CD14-positive monocyte (primary cell): ENCODE measurements at regions of chrX and their contacts with region 1.

Region 1: DNA sequence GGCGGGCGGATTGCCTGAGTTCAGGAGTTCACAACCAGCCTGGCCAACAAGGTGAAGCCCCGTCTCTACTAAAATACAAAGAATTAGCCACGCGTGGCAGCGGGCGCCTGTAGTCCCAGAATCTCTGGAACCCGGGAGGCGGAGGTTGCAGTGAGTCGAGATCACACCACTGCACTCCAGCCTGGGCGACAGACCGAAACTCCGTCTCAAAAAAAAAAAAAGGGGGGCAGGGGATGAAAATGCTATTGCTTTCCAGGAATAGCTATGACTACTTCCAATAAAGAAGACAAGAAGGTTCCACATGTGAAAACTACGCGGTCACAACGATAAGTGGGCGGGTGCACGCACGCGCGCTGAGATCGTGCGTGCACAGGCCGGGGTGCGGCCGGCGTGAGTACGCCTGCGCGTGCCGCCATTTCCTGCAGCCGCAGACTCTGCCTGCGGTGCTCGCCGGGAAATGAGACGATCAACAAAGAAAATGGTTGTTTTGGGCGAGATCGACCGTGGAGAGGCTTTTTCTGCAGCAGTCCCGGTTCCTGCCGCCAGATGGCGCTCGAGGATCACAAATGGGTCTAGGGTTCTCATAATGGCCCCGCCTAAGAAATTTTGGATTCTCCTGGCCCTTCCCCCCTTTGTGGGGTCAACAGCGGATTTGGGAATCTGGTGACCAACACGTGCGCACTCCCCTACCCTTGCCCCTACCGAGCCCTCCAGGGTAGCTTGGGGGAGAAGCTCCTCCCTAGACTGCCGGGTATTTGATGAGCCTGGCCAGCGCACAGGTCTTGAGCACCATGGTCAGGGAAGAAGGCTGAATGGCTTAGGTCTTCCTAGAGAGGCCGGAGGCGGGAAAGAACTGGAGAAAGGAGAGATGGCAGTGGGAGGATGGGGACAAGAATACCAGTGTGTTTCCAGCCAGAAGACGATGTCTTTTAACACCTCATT is 35.1 kb downstream of the PNMA5 start:
- DNase-seq: peak; percentile 84 to 90 (median 89)
- H3K4me3 ChIP-seq: peak overlapping the region in 2 of 3 experiments; percentile 20 to 58
- H3K4me3 Mint-ChIP-seq: peak overlapping the region; percentile 57 to 63
- H3K27ac ChIP-seq: peak overlapping the region; percentile 53 to 57
- H3K27ac Mint-ChIP-seq: peak overlapping the region; percentile 60 to 88 (median 79)
- H3K4me1 ChIP-seq: peaks cover 8% of the 10 kb centered on the region in 2 donors
- H3K4me1 Mint-ChIP-seq: peaks cover 12% of the 10 kb centered on the region
- H3K27me3 ChIP-seq: no peaks in the 10 kb centered on the region
- H3K27me3 Mint-ChIP-seq: peaks cover 0 to 13% (median 0%) of the 10 kb centered on the region in 3 donors
- CTCF ChIP-seq: peak; percentile 71

Region 2: DNA sequence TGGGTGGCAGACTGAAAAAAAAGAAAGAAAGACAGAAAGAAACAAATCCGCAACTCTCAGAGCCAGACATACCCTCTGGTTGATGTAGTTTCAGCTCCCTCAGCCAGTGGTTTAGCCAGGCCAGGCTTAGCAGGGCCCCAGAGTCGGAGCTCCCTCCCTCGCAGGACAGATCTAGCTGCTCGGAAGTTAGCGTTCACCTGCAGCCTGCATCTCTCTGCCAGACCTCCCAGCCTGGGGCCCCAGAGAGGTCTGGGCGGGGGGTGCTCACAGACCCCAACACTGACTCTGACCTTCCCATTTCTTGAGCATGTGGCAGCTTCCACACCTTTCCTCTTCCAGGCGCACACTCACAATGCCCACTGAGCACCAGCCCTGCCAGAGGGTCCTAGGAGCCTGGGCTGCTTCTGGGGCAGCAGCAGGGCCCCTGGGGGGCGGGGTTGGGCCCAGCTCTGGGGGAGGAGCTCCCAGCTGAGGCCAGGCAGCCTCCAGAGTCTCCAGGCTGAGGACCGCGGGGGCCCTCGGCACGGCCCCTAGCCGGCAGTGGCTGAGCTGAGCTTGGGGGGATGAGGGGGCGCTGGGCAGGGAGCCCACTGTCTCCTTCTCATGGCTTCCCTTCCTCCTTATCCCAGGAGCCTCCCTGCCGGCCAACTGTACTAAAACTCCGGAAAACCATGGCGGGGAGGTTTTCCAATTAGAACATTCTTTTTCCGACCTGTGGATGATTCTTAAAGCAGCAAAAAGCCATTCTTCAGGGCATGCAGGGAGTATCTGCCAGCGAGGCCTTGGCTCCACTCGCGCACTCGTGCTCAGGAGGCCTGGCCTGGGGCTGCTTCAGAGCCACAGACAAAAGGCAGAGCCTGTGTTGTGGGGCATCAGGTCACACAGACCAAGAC is 65.5 kb before region 1 on chrX:
- intact Hi-C with region 1: no loop called
- DNase-seq: no peak
- H3K4me3 ChIP-seq: no peak overlapping the region
- H3K4me3 Mint-ChIP-seq: no peak overlapping the region
- H3K27ac ChIP-seq: no peak overlapping the region
- H3K27ac Mint-ChIP-seq: no peak overlapping the region
- H3K4me1 ChIP-seq: peaks cover 0 to 6% of the 10 kb centered on the region in 2 donors
- H3K4me1 Mint-ChIP-seq: peaks cover 8% of the 10 kb centered on the region
- H3K27me3 ChIP-seq: peaks cover 3 to 17% of the 10 kb centered on the region in 2 donors
- H3K27me3 Mint-ChIP-seq: peaks cover 18 to 54% (median 44%) of the 10 kb centered on the region in 3 donors
- CTCF ChIP-seq: no peak

Region 3: GRCh38 chrX:153032397-153033118 is 73.8 kb after region 1 on chrX:
- intact Hi-C with region 1: loop called in 1 of 2 experiments (anchors 10 kb)
- DNase-seq: peak; percentile 68 to 71 (median 68)
- H3K4me3 ChIP-seq: peak overlapping the region; percentile 24 to 67 (median 48)
- H3K4me3 Mint-ChIP-seq: peak overlapping the region; percentile 81 to 88
- H3K27ac ChIP-seq: peak overlapping the region; percentile 50 to 84
- H3K27ac Mint-ChIP-seq: peak overlapping the region; percentile 87 to 97 (median 95)
- H3K4me1 ChIP-seq: peaks cover 7 to 8% of the 10 kb centered on the region in 2 donors
- H3K4me1 Mint-ChIP-seq: peaks cover 5% of the 10 kb centered on the region
- H3K27me3 ChIP-seq: no peaks in the 10 kb centered on the region
- H3K27me3 Mint-ChIP-seq: peaks cover 0 to 3% (median 0%) of the 10 kb centered on the region in 3 donors
- CTCF ChIP-seq: peak; percentile 82

Region 4: DNA sequence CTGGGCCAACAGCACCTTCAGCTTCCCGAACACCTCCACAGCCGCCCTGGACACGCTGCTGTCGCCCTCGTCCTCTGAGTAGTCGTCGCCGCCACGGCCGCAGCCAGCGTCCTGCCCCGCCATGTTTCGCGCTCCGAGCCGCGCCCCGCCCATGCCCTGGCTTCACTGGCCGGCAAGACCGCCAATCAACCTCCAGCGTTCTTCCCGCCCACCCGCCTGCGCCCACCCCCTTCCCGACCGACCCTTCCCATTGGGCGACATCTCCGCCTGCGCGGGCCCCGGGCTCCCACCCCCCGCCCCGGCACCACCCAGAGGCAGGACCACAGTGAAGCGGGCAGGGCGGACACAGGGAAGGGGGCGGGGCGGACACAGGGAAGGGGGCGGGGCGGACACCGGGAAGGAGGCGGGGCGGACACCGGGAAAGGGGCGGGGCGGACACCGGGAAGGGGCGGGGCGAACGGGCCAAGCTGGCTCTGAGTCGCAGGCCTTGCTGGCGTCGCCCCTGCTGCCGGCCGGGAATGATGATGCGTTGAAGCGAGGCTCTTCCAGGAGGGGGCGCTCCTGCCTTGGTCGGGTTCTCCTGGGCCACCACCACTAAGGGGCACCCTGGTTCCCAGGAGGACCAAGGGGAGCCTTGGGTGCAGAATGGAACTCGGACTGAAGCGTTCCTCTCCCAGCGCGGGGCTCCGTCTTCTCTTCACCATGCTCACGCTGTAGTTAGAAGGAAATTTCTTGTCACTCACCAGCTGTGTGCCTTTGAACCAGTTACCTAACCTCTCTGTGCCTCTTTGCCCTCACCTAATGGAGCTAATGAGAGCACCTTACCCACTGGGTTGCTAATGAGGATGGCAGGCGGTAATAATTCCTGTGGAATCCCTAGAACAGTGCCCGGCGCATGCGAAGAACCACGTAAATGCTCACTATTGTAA is 511.9 kb after region 1 on chrX and contains the start of gene HAUS7:
- intact Hi-C with region 1: loop called in 1 of 2 experiments (anchors 10 kb)
- DNase-seq: peak; percentile 78 to 92 (median 91)
- H3K4me3 ChIP-seq: peak within 1 kb of the TSS; percentile 52 to 83 (median 71)
- H3K4me3 Mint-ChIP-seq: peak within 1 kb of the TSS; percentile 82 to 86
- H3K27ac ChIP-seq: peak within 1 kb of the TSS in 1 of 2 donors; percentile 78
- H3K27ac Mint-ChIP-seq: peak within 1 kb of the TSS in 6 of 7 donors; percentile 25 to 84 (median 76)
- H3K4me1 ChIP-seq: peaks cover 20 to 21% of the 10 kb centered on the region in 2 donors
- H3K4me1 Mint-ChIP-seq: peaks cover 15% of the 10 kb centered on the region
- H3K27me3 ChIP-seq: peaks cover 0 to 8% of the 10 kb centered on the region in 2 donors
- H3K27me3 Mint-ChIP-seq: peaks cover 7 to 16% (median 14%) of the 10 kb centered on the region in 3 donors
- CTCF ChIP-seq: peak; percentile 49
- polyA plus RNA-seq, gene HAUS7: 23.8 to 37.5 (median 26.7) TPM

Region 5: DNA sequence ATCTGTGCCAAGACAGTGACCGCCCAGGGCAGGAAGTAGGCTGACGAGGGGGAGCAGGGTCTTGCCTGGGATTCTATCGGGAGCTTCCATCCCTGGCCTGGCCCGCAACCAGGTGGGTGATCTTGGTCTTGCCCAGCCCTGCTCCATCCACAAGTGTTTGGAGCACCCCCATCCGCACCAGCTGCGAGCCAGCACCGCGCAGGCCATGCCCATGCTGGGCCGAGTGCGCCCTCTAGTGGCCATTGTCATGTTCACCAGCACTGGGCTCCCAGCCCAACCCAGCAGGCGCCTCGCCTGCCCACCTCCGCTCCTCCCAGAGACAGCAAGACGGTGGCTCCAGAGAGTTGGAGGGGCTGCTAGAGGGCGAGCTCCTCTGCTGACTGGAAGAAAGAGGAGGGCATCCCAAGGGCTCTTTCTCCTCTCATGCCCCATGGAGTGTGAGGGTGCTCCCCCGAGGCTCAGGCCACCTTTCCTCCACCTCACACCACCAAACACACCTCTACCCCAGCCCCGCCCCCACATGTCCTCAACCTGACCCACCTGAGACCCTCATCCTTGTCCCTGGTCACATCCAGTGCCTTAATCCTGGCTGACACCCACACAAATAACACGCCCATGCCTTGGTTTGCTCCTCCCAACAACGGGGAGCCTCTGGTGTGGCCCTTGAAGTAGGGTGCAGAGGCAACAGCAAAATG is 548.8 kb after region 1 on chrX:
- intact Hi-C with region 1: loop called in 1 of 2 experiments (anchors 5 kb)
- DNase-seq: peak; percentile 60 to 69 (median 63)
- H3K4me3 ChIP-seq: no peak overlapping the region
- H3K4me3 Mint-ChIP-seq: no peak overlapping the region
- H3K27ac ChIP-seq: no peak overlapping the region
- H3K27ac Mint-ChIP-seq: no peak overlapping the region
- H3K4me1 ChIP-seq: no peaks in the 10 kb centered on the region
- H3K4me1 Mint-ChIP-seq: peaks cover 3% of the 10 kb centered on the region
- H3K27me3 ChIP-seq: no peaks in the 10 kb centered on the region
- H3K27me3 Mint-ChIP-seq: peaks cover 4 to 10% (median 4%) of the 10 kb centered on the region in 3 donors
- CTCF ChIP-seq: peak; percentile 65

Region 6: GRCh38 chrX:153794018-153794896 is 835.5 kb after region 1 on chrX and contains the starts of genes IDH3G and SSR4:
- intact Hi-C with region 1: loop called (anchors 5 to 10 kb)
- DNase-seq: peak; percentile 92 to 95 (median 95)
- H3K4me3 ChIP-seq: peak within 1 kb of the TSS; percentile 66 to 85 (median 76)
- H3K4me3 Mint-ChIP-seq: peak within 1 kb of the TSS; percentile 86 to 92
- H3K27ac ChIP-seq: peak within 1 kb of the TSS; percentile 85
- H3K27ac Mint-ChIP-seq: peak within 1 kb of the TSS; percentile 92 to 95 (median 95)
- H3K4me1 ChIP-seq: peaks cover 21 to 35% of the 10 kb centered on the region in 2 donors
- H3K4me1 Mint-ChIP-seq: peaks cover 26% of the 10 kb centered on the region
- H3K27me3 ChIP-seq: no peaks in the 10 kb centered on the region
- H3K27me3 Mint-ChIP-seq: peaks cover 0 to 13% (median 2%) of the 10 kb centered on the region in 3 donors
- CTCF ChIP-seq: no peak
- polyA plus RNA-seq, gene IDH3G: 115 to 201 (median 130) TPM
- polyA plus RNA-seq, gene SSR4: 201 to 419 (median 362) TPM